Psoas muscle (tissue), 8 donors: ENCODE measurements at regions of chr2 and their contacts with region 1.

Region 1: DNA sequence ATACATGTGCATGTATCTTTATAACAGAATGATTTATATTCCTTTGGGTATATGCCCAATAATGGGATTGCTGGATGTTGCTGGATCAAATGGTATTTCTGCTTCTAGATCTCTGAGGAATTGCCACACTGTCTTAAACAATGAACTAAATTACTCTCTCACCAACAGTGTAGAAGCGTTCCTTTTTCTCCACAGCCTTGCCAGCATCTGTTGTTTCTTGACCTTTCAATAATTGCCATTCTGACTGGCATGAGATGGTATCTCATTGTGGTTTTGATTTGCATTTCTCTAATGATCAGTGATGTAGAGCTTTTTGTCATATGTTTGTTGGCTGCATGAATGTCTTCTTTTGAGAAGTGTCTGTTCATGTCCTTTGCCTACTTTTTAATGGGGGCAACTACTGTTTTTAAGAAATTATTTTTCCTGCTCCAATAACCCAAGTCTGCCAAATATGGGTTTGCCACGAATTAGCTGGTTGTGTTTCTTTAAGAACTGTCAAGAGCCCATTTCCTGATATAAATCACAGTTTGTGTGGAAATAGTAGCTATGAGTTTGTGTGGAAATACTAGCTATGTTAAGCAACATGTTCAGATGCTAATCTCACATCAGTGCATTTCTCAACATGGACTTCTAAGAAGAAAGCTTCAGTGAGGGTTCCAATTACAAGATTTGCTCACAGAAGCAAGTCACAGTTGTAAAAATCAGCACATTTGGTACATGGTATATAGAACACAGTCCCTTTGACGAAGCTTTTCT is 259.4 kb downstream of the ANAPC1 start:
- DNase-seq: no peak
- ATAC-seq: peak; percentile 77 to 90 (median 87)
- H3K4me3 ChIP-seq: no peak overlapping the region
- H3K27ac ChIP-seq: peak overlapping the region; percentile 23
- H3K4me1 ChIP-seq: peaks cover 12% of the 10 kb centered on the region
- H3K27me3 ChIP-seq: no peaks in the 10 kb centered on the region
- CTCF ChIP-seq: no peak

Region 2: DNA sequence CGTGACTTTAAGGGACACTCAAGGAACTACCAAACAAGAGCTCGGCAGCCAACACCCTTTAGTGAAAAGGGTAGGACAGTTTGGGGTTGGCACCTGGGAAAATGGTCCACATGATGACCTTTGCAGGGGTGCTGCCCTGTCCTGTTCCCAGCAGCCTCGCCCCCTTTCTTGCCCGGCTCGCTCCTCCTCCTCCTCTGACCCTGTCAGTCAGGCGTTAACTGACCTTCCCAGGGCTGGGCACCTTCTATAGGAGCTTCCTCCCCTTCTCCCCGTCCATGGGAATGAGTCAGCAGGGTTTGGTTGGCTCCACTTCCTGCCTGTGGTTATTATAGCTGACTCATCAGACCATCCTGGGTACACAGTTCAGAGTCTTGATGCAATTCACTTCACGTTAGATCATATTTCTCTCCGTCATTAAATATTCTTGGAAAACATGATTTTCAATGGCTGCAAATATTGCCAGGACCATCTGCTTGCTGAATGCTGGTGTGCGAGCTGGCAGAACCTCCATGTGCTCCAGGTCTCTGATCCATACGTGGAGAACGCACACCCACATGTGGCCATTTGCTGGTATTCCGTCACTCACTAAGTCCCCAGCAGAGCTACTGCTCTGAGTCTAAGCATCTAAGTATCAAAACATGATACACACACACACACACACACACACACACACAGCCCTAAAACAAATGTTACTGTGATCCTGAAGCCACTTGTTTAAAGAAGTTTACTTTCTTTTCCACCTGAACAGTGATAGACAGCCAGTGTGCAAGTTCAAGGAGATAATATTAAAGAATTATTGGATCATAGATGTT is 74.4 kb after region 1 on chr2:
- intact Hi-C with region 1: loop called (anchors 5 to 10 kb)
- DNase-seq: peak; percentile 78 to 83
- ATAC-seq: peak; percentile 93 to 94 (median 94)
- H3K4me3 ChIP-seq: peak overlapping the region; percentile 46
- H3K27ac ChIP-seq: peak overlapping the region; percentile 78
- H3K4me1 ChIP-seq: peaks cover 27% of the 10 kb centered on the region
- H3K27me3 ChIP-seq: no peaks in the 10 kb centered on the region
- CTCF ChIP-seq: no peak

Region 3: GRCh38 chr2:111705711-111706336 is 81.2 kb after region 1 on chr2:
- intact Hi-C with region 1: loop called in 1 of 2 experiments (anchors 10 kb)
- DNase-seq: peak in 1 of 2 donors; percentile 53
- ATAC-seq: peak; percentile 44 to 70 (median 62)
- H3K4me3 ChIP-seq: no peak overlapping the region
- H3K27ac ChIP-seq: peak overlapping the region; percentile 69
- H3K4me1 ChIP-seq: peaks cover 41% of the 10 kb centered on the region
- H3K27me3 ChIP-seq: no peaks in the 10 kb centered on the region
- CTCF ChIP-seq: no peak